ENCODE measurements at regions of chr14 and their contacts with region 1.

Region 1: DNA sequence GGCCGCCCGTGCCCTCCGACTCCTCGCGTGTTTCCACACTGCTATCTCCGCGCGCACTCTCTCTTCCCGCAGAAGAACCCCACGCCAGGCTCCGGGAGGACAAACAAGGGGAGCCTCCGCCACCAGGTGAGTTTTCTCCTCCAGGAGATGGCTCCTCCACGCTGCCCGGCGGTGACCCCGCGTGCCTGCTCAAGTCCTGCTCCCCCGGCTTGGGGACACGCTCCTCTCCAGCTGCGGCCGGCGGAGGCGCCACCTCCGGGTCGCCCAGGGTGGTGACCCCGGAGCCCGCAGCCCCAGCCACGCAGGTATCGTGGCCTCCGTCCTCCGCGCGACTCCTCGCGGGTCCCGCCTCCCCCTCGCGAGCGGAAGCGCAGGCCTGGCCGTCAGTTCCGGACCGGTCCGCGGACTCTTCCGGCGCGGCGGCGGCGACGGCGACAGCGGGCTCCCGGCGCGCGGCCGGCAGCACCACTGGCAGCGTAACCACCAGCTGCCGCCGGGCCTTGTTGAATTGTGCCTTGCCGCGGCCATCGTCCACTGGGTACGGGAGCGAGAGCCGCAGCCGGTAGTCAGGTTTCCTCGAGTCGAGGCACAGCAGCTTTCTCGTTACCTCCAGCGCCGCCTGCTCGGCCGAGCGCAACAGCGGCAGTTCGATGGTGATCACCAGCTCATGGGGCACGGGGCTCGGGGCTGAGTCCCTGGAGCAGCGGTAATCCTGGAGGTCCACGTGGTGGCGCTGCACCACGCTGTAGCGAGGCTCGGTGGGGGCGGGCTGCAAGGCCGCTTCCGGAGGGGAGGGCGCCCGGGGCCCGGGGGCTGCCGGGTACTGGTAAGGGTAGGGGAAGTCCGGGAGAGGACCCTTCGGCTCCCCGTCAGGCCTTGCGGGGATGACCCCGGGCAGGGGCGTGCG is 1.2 kb downstream of the DNAAF2 start:
- DNase-seq: peak; percentile 96
- H3K4me3 ChIP-seq: peak overlapping the region; percentile 65 to 90 (median 76)
- H3K27ac ChIP-seq: peak overlapping the region; percentile 94 to 99 (median 96)
- H3K4me1 ChIP-seq: peaks cover 17 to 44% (median 29%) of the 10 kb centered on the region in 4 donors
- H3K27me3 ChIP-seq: no peaks in the 10 kb centered on the region
- CTCF ChIP-seq: peak; percentile 74 to 81 (median 76)
- EP300 ChIP-seq: no peak
- POLR2A ChIP-seq: peak; percentile 83

Region 2: DNA sequence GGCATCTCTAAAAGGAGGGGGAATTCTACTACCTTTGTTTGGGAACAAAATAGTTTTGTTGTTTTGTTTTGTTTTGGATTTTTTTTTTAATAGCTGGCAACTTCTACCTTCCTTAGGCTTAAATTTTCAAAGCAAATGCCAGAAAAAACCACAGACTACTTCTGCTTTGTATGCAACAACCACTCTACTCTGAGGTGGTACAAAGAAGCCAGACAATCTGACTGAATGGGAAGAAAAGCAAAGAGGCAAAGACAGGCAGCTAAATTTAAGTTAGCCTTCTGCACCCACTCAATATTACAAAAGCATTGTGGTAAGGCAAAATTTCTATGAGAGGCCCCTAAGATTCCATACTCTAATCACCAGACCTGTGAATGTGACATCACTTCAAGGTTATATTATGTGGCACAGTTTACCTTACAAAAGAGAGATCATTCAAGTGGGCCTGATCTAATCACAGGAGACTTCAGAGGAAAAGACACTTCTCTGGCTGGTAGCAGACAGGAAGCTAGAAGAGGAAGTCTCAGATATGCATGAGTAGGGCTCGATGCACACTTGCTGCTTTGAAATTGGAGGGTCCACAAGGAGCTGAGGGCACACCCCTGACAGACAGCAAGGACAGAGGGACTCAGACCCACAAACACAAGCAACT is 614.3 kb before region 1 on chr14:
- in situ Hi-C with region 1: no loop called
- intact Hi-C with region 1: no loop called
- DNase-seq: no peak
- H3K4me3 ChIP-seq: no peak overlapping the region
- H3K27ac ChIP-seq: no peak overlapping the region
- H3K4me1 ChIP-seq: no peaks in the 10 kb centered on the region
- H3K27me3 ChIP-seq: no peaks in the 10 kb centered on the region
- CTCF ChIP-seq: no peak
- EP300 ChIP-seq: no peak
- POLR2A ChIP-seq: no peak

Region 3: GRCh38 chr14:49276876-49277275 is 357.0 kb before region 1 on chr14:
- in situ Hi-C with region 1: no loop called
- intact Hi-C with region 1: no loop called
- DNase-seq: no peak
- H3K4me3 ChIP-seq: no peak overlapping the region
- H3K27ac ChIP-seq: no peak overlapping the region
- H3K4me1 ChIP-seq: no peaks in the 10 kb centered on the region
- H3K27me3 ChIP-seq: no peaks in the 10 kb centered on the region
- CTCF ChIP-seq: no peak
- EP300 ChIP-seq: no peak
- POLR2A ChIP-seq: no peak

Region 4: DNA sequence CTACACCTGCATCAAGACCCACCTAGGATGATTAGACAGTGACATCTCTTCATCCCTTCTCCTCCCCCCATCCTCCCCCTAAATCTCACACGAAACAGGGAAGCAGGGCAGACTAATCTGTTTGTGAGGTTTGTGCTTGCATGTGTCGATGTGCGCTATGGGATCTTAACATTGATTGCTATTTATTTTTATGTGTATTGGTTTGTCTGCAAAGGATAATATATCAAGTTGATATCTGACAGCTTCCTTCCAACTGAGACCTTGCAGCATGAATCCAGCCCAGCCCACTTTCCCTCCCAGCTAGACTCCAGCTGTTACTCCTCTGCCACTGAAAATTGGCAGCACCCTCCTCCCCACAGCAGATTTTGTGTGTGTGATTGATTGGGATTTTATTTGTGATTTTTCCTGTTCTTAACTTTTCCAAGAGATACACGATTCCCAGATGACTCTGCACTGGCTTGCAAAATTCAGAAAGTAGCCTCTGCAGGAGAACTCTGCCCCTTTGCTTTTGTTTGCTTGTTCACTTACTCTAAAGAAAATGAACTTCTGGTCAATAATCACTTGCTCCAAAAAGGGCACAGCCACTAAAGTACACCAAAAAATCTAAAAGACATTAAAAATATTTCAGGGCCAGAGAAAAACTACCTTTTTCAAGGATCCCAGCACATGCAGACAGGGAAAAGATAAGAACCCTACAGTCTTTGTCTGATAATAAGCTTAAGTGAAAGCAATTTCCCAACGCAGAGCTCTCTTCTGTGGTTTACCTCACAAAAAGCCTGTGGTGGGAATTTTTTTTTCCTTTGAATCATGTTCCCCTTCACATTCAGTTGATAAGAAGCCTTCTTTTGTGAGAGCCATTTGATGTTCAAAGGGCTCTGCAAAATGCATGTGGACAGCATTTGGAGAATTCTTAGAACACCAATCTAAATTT is 269.8 kb before region 1 on chr14:
- in situ Hi-C with region 1: no loop called
- intact Hi-C with region 1: no loop called
- DNase-seq: no peak
- H3K4me3 ChIP-seq: no peak overlapping the region
- H3K27ac ChIP-seq: no peak overlapping the region
- H3K4me1 ChIP-seq: no peaks in the 10 kb centered on the region
- H3K27me3 ChIP-seq: no peaks in the 10 kb centered on the region
- CTCF ChIP-seq: no peak
- EP300 ChIP-seq: no peak
- POLR2A ChIP-seq: no peak

Region 5: DNA sequence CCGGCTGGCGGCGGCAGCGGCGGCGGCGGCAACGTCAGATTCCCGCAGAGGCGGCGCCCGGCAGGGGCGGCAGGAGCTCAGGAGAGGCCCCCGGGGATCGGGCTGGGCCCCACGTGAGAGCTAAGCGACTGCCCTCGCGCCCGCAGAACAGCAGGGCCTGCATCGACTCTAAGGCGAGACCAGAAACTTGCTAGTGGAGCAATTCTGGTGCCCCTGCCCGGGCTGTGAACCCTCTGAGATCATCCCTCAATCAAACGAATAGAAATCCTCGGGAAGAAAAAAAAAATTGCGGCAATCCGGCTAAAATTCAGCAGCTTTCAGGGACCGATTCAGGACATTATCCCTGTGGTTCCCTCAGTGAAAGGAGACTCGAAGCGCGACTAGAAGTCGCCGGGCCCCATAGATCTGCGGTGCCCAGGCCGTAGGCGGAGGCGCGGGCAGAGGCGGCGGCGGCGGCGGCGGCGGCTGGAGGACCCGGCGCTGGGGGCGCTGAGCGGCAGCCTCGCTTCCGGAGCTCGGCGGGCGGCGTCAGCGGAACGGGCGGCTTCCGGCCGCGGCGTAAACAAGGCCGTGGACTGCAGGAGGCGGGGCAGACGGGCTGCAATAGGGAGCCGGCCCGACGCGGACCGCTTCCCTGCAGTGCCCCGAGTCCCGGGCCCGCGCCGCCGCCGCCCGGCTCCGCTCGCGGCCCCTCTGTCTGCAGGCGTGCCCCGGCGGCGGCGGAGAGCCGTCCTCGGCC is 133.8 kb after region 1 on chr14 and contains the start of gene KLHDC2:
- in situ Hi-C with region 1: loop called in 3 of 4 experiments (anchors 10 to 25 kb)
- intact Hi-C with region 1: no loop called
- DNase-seq: peak; percentile 92
- H3K4me3 ChIP-seq: peak within 1 kb of the TSS; percentile 79 to 99 (median 90)
- H3K27ac ChIP-seq: peak within 1 kb of the TSS; percentile 98 to 100 (median 99)
- H3K4me1 ChIP-seq: peaks cover 22 to 39% (median 38%) of the 10 kb centered on the region in 4 donors
- H3K27me3 ChIP-seq: no peaks in the 10 kb centered on the region
- CTCF ChIP-seq: peak in 2 of 5 experiments; percentile 8
- EP300 ChIP-seq: no peak
- POLR2A ChIP-seq: peak; percentile 77
- total RNA-seq, gene KLHDC2: 88.6 to 113 (median 109) TPM

Region 6: GRCh38 chr14:49852301-49853157 is 218.6 kb after region 1 on chr14 and contains the start of gene NEMF:
- in situ Hi-C with region 1: loop called in 2 of 4 experiments (anchors 10 to 25 kb)
- intact Hi-C with region 1: no loop called
- DNase-seq: peak; percentile 88
- H3K4me3 ChIP-seq: peak within 1 kb of the TSS; percentile 61 to 91 (median 72)
- H3K27ac ChIP-seq: peak within 1 kb of the TSS; percentile 91 to 94 (median 93)
- H3K4me1 ChIP-seq: peaks cover 16 to 40% (median 17%) of the 10 kb centered on the region in 4 donors
- H3K27me3 ChIP-seq: no peaks in the 10 kb centered on the region
- CTCF ChIP-seq: peak; percentile 73 to 97 (median 80)
- EP300 ChIP-seq: no peak
- POLR2A ChIP-seq: peak; percentile 89
- total RNA-seq, gene NEMF: 50.2 to 129 (median 79.3) TPM

Region 7: DNA sequence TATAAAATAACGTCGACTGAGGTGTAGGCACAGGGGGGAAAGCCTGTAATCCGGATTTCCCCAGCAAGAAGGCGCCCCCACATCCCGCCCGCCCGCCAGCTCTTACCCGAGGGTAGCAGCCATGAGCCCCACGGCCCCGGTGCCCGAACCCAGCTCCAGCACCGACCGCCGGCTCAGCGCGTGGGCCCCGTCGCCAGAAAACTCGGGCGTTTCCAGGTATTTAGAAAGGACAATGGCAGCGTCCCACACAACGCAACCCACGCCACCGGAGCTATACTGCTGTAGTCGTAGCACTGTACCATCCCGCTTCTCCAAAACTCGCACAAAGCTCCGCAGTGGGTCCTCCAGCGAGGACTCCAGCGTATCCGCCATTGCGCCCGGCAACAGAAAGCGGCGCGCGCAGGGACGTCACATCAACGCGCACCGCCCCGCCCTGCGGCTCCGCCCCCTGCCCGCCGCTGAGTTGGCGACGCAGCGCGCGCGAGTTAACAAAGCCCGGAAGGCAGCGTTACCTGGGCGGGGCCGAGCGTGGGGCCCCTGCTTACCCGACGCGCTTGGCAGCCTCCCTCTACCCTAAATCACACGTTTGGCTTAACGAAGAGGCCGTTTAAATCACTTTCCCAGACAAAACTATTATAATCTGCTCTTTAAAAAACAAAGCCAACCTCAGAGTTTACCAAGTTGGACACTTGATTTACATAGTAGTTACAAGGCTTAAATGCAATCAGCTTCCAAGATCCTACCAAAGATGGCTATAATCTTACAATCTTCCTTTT is 482.5 kb after region 1 on chr14 and contains the start of gene VCPKMT:
- in situ Hi-C with region 1: loop called in 1 of 4 experiments (anchors 25 kb)
- intact Hi-C with region 1: no loop called
- DNase-seq: peak; percentile 96
- H3K4me3 ChIP-seq: peak within 1 kb of the TSS; percentile 68 to 95 (median 79)
- H3K27ac ChIP-seq: peak within 1 kb of the TSS; percentile 83 to 97 (median 89)
- H3K4me1 ChIP-seq: peaks cover 8 to 22% (median 13%) of the 10 kb centered on the region in 4 donors
- H3K27me3 ChIP-seq: no peaks in the 10 kb centered on the region
- CTCF ChIP-seq: no peak
- EP300 ChIP-seq: no peak
- POLR2A ChIP-seq: peak; percentile 87
- total RNA-seq, gene VCPKMT: 3.7 to 12.1 (median 5.9) TPM

Region 8: GRCh38 chr14:50554431-50554996 is 920.6 kb after region 1 on chr14:
- in situ Hi-C with region 1: no loop called
- intact Hi-C with region 1: no loop called
- DNase-seq: no peak
- H3K4me3 ChIP-seq: no peak overlapping the region
- H3K27ac ChIP-seq: no peak overlapping the region
- H3K4me1 ChIP-seq: peaks cover 0 to 4% (median under 1%) of the 10 kb centered on the region in 4 donors
- H3K27me3 ChIP-seq: no peaks in the 10 kb centered on the region
- CTCF ChIP-seq: no peak
- EP300 ChIP-seq: no peak
- POLR2A ChIP-seq: no peak